ENCODE measurements at regions of chr5 and their contacts with region 1.

Region 1: DNA sequence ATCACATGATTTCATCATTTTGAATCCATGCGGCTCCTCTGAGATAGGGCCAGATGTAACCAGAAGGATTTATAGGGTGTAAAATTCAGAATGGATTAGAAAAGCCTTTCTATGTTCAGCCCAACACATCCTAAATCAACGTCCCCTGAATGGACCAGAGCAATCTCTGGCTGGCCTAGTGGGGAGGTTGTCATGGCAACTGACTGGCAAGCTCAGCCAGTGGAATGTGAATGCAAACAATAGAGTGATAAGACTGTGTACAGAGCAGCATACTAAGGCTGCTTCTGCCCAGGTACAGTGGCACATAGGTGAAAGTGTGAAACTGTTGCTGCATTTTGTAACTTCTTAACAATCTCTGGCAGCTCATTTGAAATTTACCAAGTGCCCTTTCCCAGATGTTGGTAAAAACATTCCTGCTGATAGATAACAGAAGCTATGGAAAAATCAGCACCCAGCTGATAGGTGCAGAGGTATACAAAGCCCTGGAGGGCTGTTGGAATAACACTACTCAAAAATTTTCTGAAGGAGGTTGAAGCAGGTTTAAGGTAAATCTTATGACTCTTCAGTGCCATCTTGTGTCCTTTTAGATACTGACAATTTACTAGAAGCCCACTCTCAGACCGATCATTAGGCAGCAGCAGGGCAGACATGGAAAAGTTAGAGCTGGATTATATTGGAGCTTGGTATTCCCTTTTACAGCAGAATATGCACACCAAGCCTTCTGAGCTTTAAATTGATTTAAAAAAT is 267.2 kb downstream of the RAB3C start:
- DNase-seq: peak in 6 of 10 donors; percentile 18 to 47 (median 38)
- H3K4me3 ChIP-seq: no peak overlapping the region
- H3K27ac ChIP-seq: peak overlapping the region in 2 of 59 donors; percentile 17 to 26
- H3K27me3 ChIP-seq: no peaks in the 10 kb centered on the region
- CTCF ChIP-seq: peak; percentile 36 to 75 (median 56)

Region 2: GRCh38 chr5:58498340-58498942 is 351.7 kb before region 1 on chr5:
- intact Hi-C with region 1: loop called (anchors 5 kb)
- DNase-seq: peak in 5 of 10 donors; percentile 23 to 67 (median 39)
- H3K4me3 ChIP-seq: no peak overlapping the region
- H3K27ac ChIP-seq: no peak overlapping the region
- H3K27me3 ChIP-seq: peaks cover 0 to 4% (median 0%) of the 10 kb centered on the region in 45 donors
- CTCF ChIP-seq: peak; percentile 32 to 82 (median 70)

Region 3: DNA sequence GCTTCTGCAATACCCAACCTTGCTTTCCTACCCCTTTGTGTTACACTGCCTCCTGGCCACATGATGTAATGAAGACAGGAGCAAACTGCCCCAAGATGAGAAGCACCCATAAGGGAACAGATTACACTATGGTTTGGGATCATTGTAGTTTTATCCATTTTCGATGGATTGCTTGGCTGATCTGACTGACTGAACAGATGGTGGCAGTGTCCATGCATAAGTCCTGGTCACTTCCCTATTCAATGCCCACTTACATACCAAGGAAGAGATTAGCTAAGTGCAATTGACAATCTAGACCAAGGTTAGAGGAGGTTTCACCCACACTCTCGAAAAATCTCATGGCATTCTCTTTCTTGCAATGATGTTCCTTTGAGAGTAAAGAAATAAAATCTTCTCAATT is 52.7 kb after region 1 on chr5:
- intact Hi-C with region 1: no loop called
- DNase-seq: no peak
- H3K4me3 ChIP-seq: no peak overlapping the region
- H3K27ac ChIP-seq: peak overlapping the region in 2 of 59 donors; percentile 1 to 24
- H3K27me3 ChIP-seq: no peaks in the 10 kb centered on the region
- CTCF ChIP-seq: peak in 10 of 56 donors; percentile 6 to 37 (median 13)